ENCODE measurements at regions of chr2 and their contacts with region 1.

Region 1: GRCh38 chr2:38581193-38582147 is 21.3 kb downstream of the HNRNPLL start:
- DNase-seq: peak; percentile 44
- H3K4me3 ChIP-seq: no peak overlapping the region
- H3K27ac ChIP-seq: peak overlapping the region in 1 of 2 experiments; percentile 3; a peak in 1 of 4 replicates
- H3K4me1 ChIP-seq: peaks cover 0 to 13% of the 10 kb centered on the region in 2 experiments; a peak in 2 of 4 replicates
- H3K27me3 ChIP-seq: no peaks in the 10 kb centered on the region
- CTCF ChIP-seq: peak; percentile 89
- EP300 ChIP-seq: no peak
- RAD21 ChIP-seq: peak; percentile 89

Region 2: DNA sequence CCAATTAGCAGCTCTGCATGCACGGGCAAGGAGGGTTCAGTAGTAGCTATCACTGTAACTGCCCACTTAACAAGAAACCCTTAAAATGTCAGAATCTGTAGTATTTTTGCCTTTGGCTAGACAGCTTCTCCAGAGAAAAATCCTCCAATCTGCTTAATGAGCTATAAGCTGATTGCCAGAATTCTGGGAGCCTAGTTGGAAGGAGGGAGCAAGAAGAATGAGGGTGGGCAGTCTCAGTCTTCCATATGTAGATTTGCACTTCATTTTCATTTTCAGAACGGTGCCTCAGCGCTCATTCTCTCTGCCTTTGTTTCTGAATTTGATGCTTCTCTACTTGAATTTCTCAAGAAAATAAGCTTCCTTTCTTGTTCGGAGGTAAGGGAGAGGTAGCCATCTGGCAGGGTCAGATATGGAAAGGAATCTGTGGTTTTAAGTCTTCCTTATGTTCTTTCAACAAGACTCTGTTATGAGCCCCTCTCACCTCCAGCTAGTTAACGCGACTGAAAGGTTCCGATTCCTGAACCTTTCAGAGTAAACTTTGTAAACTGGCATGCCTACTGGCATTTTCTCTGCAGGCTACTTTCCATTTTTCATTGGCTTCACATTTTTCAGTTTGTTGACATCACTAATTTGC is 32.3 kb before region 1 on chr2:
- CTCF ChIA-PET with region 1: interaction called, 24 read pairs
- POLR2A ChIA-PET with region 1: no interaction called
- DNase-seq: no peak
- H3K4me3 ChIP-seq: no peak overlapping the region
- H3K27ac ChIP-seq: no peak overlapping the region
- H3K4me1 ChIP-seq: peaks cover 0 to 2% of the 10 kb centered on the region in 2 experiments; a peak in 1 of 4 replicates
- H3K27me3 ChIP-seq: no peaks in the 10 kb centered on the region
- CTCF ChIP-seq: no peak
- EP300 ChIP-seq: no peak
- RAD21 ChIP-seq: no peak

Region 3: DNA sequence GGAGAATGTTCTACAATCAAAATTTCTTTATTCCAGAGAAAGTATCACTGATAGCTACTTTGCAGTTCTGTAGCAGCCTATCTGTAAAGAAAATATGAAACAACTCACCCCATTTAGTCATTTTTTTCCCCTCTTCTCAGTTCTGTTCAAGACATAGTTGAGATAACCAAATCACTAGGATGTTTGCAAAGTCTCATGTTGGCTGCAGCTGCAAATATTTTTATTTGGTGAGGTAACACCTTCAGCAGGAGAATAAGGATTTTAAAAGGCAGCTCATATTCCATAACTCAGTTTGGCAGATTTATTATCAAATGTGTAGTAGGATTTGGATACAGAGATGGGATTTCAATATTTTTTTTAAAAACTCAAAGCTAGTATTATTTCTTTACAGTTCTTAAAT is 19.8 kb before region 1 on chr2:
- CTCF ChIA-PET with region 1: interaction called, 42 read pairs
- POLR2A ChIA-PET with region 1: no interaction called
- DNase-seq: no peak
- H3K4me3 ChIP-seq: no peak overlapping the region
- H3K27ac ChIP-seq: no peak overlapping the region
- H3K4me1 ChIP-seq: no peaks in the 10 kb centered on the region; a peak in 1 of 4 replicates
- H3K27me3 ChIP-seq: no peaks in the 10 kb centered on the region
- CTCF ChIP-seq: no peak
- EP300 ChIP-seq: no peak
- RAD21 ChIP-seq: no peak

Region 4: DNA sequence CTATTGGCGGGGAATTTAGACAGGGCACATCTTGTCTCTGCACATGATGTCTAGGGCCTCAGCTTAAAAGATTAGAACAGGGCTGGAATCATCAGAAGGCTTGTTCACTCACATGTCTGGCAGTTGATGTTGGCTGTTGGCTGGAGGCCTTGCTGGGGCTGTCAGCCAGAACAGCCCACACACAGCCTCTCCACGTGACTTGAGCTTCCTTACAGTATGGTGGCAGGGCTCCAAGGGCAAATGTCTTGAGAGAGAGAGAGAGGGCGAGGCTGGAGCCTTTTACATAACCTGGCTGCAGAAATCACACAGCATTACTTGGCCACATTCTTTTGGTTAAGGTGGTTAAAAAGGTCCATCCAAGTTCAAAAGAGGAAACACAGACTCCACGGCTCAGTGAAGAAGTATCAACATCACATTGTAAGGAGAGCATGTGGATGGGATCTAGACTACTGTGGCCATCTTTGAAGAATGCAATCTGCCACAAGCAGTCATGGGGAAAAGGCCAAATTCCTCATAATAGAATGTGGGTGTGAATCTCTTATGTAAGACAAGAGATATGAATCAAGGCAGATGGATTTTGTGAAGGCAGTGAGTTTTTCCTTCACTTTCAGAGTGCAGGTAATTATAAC is 139.3 kb after region 1 on chr2:
- CTCF ChIA-PET with region 1: interaction called, 25 read pairs
- POLR2A ChIA-PET with region 1: no interaction called
- DNase-seq: no peak
- H3K4me3 ChIP-seq: no peak overlapping the region
- H3K27ac ChIP-seq: peak overlapping the region in 1 of 2 experiments; percentile 3; a peak in 1 of 4 replicates
- H3K4me1 ChIP-seq: no peaks in the 10 kb centered on the region
- H3K27me3 ChIP-seq: no peaks in the 10 kb centered on the region
- CTCF ChIP-seq: no peak
- EP300 ChIP-seq: no peak
- RAD21 ChIP-seq: no peak

Region 5: GRCh38 chr2:38734299-38735058 is 153.0 kb after region 1 on chr2:
- CTCF ChIA-PET with region 1: interaction called, 39 read pairs
- POLR2A ChIA-PET with region 1: no interaction called
- DNase-seq: no peak
- H3K4me3 ChIP-seq: no peak overlapping the region
- H3K27ac ChIP-seq: no peak overlapping the region
- H3K4me1 ChIP-seq: no peaks in the 10 kb centered on the region; a peak in 1 of 4 replicates
- H3K27me3 ChIP-seq: no peaks in the 10 kb centered on the region
- CTCF ChIP-seq: no peak
- EP300 ChIP-seq: no peak
- RAD21 ChIP-seq: no peak

Region 6: GRCh38 chr2:38750891-38751595 is 169.6 kb after region 1 on chr2 and contains the start of gene SRSF7:
- CTCF ChIA-PET with region 1: interaction called, 16 read pairs
- POLR2A ChIA-PET with region 1: interaction called, 10 read pairs
- DNase-seq: peak; percentile 98
- H3K4me3 ChIP-seq: peak within 1 kb of the TSS; percentile 92 to 94
- H3K27ac ChIP-seq: peak within 1 kb of the TSS; percentile 92 to 100
- H3K4me1 ChIP-seq: peaks cover 41 to 43% of the 10 kb centered on the region in 2 experiments
- H3K27me3 ChIP-seq: no peaks in the 10 kb centered on the region
- CTCF ChIP-seq: no peak
- EP300 ChIP-seq: peak; percentile 30 to 38; a peak in 3 of 4 replicates
- RAD21 ChIP-seq: no peak
- polyA plus RNA-seq, gene SRSF7: 199 and 212 TPM in 2 replicates

Measured in SK-N-SH (cell line).